ENCODE measurements at regions of chr3 and their contacts with region 1.

Region 1: GRCh38 chr3:117790235-117790987 is 1080.8 kb downstream of the TUSC7 start:
- DNase-seq: no peak
- H3K4me3 ChIP-seq: no peak overlapping the region
- H3K27ac ChIP-seq: no peak overlapping the region
- H3K4me1 ChIP-seq: no peaks in the 10 kb centered on the region
- H3K27me3 ChIP-seq: no peaks in the 10 kb centered on the region
- CTCF ChIP-seq: no peak
- POLR2A ChIP-seq: no peak

Region 2: GRCh38 chr3:117874904-117875874 is 84.8 kb after region 1 on chr3:
- CTCF ChIA-PET with region 1: interaction called, 3 read pairs
- POLR2A ChIA-PET with region 1: no interaction called
- dilution Hi-C with region 1: no loop called
- intact Hi-C with region 1: loop called (anchors 5 kb)
- DNase-seq: no peak
- H3K4me3 ChIP-seq: no peak overlapping the region
- H3K27ac ChIP-seq: no peak overlapping the region
- H3K4me1 ChIP-seq: peaks cover 2% of the 10 kb centered on the region
- H3K27me3 ChIP-seq: no peaks in the 10 kb centered on the region
- CTCF ChIP-seq: no peak
- POLR2A ChIP-seq: no peak

Measured in endothelial cell of umbilical vein (primary cell).